Right ventricle myocardium superior (tissue), 1 donor: ENCODE measurements at regions of chrX and their contacts with region 1.

Region 1: GRCh38 chrX:23901805-23902204 is 5.9 kb downstream of the APOO start:
- DNase-seq: no peak
- ATAC-seq: peak; percentile 93

Region 2: GRCh38 chrX:23732704-23733103 is 169.1 kb before region 1 on chrX:
- intact Hi-C with region 1: no loop called
- DNase-seq: no peak
- ATAC-seq: no peak

Region 3: DNA sequence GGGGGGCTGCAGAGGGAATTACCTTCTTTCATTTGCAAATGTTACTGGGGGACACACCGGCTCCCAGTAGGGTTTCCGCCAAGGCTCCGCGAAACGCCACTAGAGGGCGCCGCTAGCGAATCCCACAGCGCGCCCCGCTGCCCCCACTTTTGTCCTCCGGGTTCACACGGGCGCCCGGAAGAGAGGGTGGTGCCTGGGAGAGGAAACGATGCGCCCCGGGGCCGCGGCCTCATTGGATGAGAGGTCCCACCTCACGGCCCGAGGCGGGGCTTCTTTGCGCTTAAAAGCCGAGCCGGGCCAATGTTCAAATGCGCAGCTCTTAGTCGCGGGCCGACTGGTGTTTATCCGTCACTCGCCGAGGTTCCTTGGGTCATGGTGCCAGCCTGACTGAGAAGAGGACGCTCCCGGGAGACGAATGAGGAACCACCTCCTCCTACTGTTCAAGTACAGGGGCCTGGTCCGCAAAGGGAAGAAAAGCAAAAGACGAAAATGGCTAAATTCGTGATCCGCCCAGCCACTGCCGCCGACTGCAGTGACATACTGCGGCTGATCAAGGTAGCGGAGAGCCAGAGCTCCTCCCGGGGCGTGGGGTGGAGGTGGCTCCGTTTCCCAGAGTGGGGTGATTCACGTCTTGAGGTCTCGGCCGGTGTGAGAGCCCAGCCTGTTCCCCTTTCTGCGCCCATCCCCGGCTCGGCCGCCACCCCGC is 118.8 kb before region 1 on chrX and contains the start of gene SAT1:
- intact Hi-C with region 1: loop called (anchors 2 kb)
- DNase-seq: peak; percentile 97
- ATAC-seq: peak; percentile 93
- total RNA-seq, gene SAT1: 111 TPM

Region 4: GRCh38 chrX:23817172-23817601 is 84.6 kb before region 1 on chrX:
- intact Hi-C with region 1: no loop called
- DNase-seq: no peak
- ATAC-seq: no peak

Region 5: GRCh38 chrX:23861215-23861896 is 40.4 kb before region 1 on chrX:
- intact Hi-C with region 1: no loop called
- DNase-seq: no peak
- ATAC-seq: no peak